GM12878 (cell line): ENCODE measurements at regions of chr10 and their contacts with region 1.

Region 1: DNA sequence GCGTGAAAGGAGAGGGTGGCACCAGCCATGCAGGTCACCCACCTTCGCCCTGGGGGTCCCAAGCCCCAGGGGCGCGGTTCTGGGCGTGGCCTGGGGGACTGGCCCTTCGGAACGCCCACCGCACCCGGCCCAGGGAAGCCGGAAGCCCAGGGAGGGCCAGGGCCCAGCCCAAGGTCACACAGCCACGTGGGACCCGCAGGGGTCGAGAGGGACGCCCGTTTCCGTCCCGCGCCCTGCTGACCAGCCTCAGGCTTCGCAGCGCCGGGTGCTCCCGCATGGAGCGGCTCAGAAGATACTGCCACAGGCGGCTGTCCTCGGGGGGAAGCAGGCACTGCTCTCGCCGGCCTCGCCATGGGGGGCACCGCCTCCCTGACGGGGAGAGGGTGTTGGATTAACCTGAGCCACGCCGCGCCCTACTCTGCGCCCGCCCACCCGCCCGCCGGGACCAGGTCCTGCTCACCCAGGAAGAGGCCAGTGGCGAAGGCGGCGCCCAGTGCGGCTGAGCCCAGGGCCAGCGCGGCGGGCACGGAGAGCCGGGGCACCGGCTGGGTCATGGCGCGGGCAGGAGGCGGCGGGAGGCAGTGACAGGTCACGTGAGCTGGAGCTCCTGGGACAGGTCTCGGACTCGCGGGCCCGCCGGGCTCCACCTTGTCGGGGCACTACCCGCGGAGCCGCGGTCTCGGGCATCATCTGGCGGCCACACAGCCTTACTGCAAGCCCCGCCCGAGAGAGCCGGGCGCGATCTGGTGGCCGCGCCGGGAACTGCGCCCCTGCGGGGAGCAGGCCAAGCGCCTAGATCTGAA is at the start of gene COMTD1:
- DNase-seq: peak; percentile 47
- ATAC-seq: peak; percentile 75
- H3K4me3 ChIP-seq: peak within 1 kb of the TSS; percentile 86
- H3K27ac ChIP-seq: peak within 1 kb of the TSS; percentile 82
- H3K4me1 ChIP-seq: peaks cover 11% of the 10 kb centered on the region
- H3K27me3 ChIP-seq: no peaks in the 10 kb centered on the region
- CTCF ChIP-seq: peak; percentile 100; a peak in 5 of 6 replicates
- EP300 ChIP-seq: no peak
- POLR2A ChIP-seq: peak; percentile 67
- RAD21 ChIP-seq: peak; percentile 85
- polyA plus RNA-seq, gene COMTD1: 0.39 to 3.4 TPM

Region 2: GRCh38 chr10:74244097-74244685 is 991.4 kb before region 1 on chr10:
- CTCF ChIA-PET with region 1: interaction called, 27 read pairs
- POLR2A ChIA-PET with region 1: no interaction called
- RAD21 ChIA-PET with region 1: interaction called, 8 read pairs
- SMC1A ChIA-PET with region 1: interaction called, 3 read pairs
- in situ Hi-C with region 1: no loop called
- intact Hi-C with region 1: no loop called
- DNase-seq: no peak
- ATAC-seq: no peak
- H3K4me3 ChIP-seq: no peak overlapping the region
- H3K27ac ChIP-seq: no peak overlapping the region
- H3K4me1 ChIP-seq: no peaks in the 10 kb centered on the region
- H3K27me3 ChIP-seq: no peaks in the 10 kb centered on the region
- CTCF ChIP-seq: peak; percentile 16 to 48 (median 40); a peak in 3 of 6 replicates
- EP300 ChIP-seq: no peak
- POLR2A ChIP-seq: no peak
- RAD21 ChIP-seq: peak; percentile 61

Region 3: DNA sequence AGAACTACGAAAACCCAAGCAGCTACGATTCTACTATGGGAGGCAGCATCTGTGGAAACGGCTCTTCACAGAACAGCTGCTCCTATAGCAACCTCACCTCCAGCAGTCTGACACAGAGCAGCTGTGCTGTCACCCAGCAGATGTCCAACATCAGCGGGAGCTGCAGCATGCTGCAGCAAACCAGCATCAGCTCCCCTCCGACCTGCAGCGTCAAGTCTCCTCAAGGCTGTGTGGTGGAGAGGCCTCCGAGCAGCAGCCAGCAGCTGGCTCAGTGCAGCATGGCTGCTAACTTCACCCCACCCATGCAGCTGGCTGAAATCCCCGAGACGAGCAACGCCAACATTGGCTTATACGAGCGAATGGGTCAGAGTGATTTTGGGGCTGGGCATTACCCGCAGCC is 205.7 kb before region 1 on chr10:
- CTCF ChIA-PET with region 1: no interaction called
- POLR2A ChIA-PET with region 1: no interaction called
- RAD21 ChIA-PET with region 1: interaction called, 3 read pairs
- SMC1A ChIA-PET with region 1: no interaction called
- in situ Hi-C with region 1: no loop called
- intact Hi-C with region 1: loop called (anchors 5 kb)
- DNase-seq: no peak
- ATAC-seq: no peak
- H3K4me3 ChIP-seq: no peak overlapping the region
- H3K27ac ChIP-seq: no peak overlapping the region
- H3K4me1 ChIP-seq: peaks cover 15% of the 10 kb centered on the region
- H3K27me3 ChIP-seq: no peaks in the 10 kb centered on the region
- CTCF ChIP-seq: no peak
- EP300 ChIP-seq: no peak
- POLR2A ChIP-seq: no peak
- RAD21 ChIP-seq: no peak

Region 4: DNA sequence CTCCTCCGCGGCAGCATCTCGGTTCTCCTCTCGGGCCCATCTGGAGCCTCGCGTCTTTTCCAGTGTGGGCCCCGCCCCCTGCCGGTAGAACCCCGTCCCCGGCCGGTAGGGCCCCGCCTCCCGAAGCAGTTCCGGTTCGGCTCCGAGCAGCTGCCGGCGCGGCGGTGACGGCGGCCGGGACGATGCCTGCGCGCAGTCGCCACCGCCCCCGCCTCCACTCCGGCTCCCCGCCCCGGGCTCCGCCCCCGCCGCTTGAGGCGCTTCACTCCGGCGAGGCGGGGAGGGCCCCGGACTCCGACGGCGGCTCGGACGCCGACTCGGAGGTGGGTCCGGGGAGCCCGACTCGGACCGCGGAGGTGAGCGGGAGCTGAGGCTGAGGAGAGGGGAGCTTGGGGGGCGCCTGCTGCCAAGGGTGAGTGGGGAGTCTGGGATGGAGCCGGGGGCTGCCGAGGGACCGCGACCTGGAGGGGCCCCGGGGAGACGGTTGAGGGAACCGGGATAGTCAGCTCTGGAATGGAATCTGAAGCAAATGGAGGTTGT is 124.1 kb before region 1 on chr10 and contains the start of gene SAMD8:
- CTCF ChIA-PET with region 1: interaction called, 13 read pairs
- POLR2A ChIA-PET with region 1: interaction called, 3 read pairs
- RAD21 ChIA-PET with region 1: interaction called, 5 read pairs
- SMC1A ChIA-PET with region 1: interaction called, 11 read pairs
- in situ Hi-C with region 1: loop called (anchors 5 kb)
- intact Hi-C with region 1: loop called (anchors 1 kb)
- DNase-seq: peak; percentile 83
- ATAC-seq: peak; percentile 87
- H3K4me3 ChIP-seq: peak within 1 kb of the TSS; percentile 94
- H3K27ac ChIP-seq: peak within 1 kb of the TSS; percentile 81
- H3K4me1 ChIP-seq: peaks cover 13% of the 10 kb centered on the region
- H3K27me3 ChIP-seq: no peaks in the 10 kb centered on the region
- CTCF ChIP-seq: peak in 2 of 3 experiments; percentile 4 to 13; a peak in 1 of 6 replicates
- EP300 ChIP-seq: peak in 1 of 2 experiments; percentile 2; a peak in 1 of 4 replicates
- POLR2A ChIP-seq: peak; percentile 96
- RAD21 ChIP-seq: no peak
- polyA plus RNA-seq, gene SAMD8: 2.8 to 3.5 TPM

Region 5: GRCh38 chr10:75187961-75188426 is 47.6 kb before region 1 on chr10:
- CTCF ChIA-PET with region 1: interaction called, 207 read pairs
- POLR2A ChIA-PET with region 1: interaction called, 6 read pairs
- RAD21 ChIA-PET with region 1: interaction called, 52 read pairs
- SMC1A ChIA-PET with region 1: interaction called, 21 read pairs
- in situ Hi-C with region 1: no loop called
- intact Hi-C with region 1: loop called (anchors 1 kb)
- DNase-seq: peak; percentile 20
- ATAC-seq: peak; percentile 96
- H3K4me3 ChIP-seq: no peak overlapping the region
- H3K27ac ChIP-seq: no peak overlapping the region
- H3K4me1 ChIP-seq: no peaks in the 10 kb centered on the region
- H3K27me3 ChIP-seq: no peaks in the 10 kb centered on the region
- CTCF ChIP-seq: peak; percentile 75 to 81 (median 79)
- EP300 ChIP-seq: no peak
- POLR2A ChIP-seq: no peak
- RAD21 ChIP-seq: peak; percentile 83

Region 6: GRCh38 chr10:75210282-75211006 is 25.1 kb before region 1 on chr10 and contains the start of gene VDAC2:
- CTCF ChIA-PET with region 1: interaction called, 76 read pairs
- POLR2A ChIA-PET with region 1: interaction called, 26 read pairs
- RAD21 ChIA-PET with region 1: interaction called, 8 read pairs
- SMC1A ChIA-PET with region 1: interaction called, 18 read pairs
- in situ Hi-C with region 1: no loop called
- intact Hi-C with region 1: loop called (anchors 2 kb)
- DNase-seq: peak; percentile 75
- ATAC-seq: peak; percentile 91
- H3K4me3 ChIP-seq: peak within 1 kb of the TSS; percentile 91
- H3K27ac ChIP-seq: peak within 1 kb of the TSS; percentile 98
- H3K4me1 ChIP-seq: 0 out of 2 replicates have a peak, but pooled peaks cover 4% of the 10 kb centered on the region
- H3K27me3 ChIP-seq: no peaks in the 10 kb centered on the region
- CTCF ChIP-seq: no peak
- EP300 ChIP-seq: peak; percentile 23 to 31; a peak in 1 of 4 replicates
- POLR2A ChIP-seq: peak; percentile 92
- RAD21 ChIP-seq: no peak
- polyA plus RNA-seq, gene VDAC2: 99.7 to 136 TPM